Activated CD4-positive, alpha-beta memory T cell treated with anti-CD3 and anti-CD28 coated beads for 36 hours (primary cell): ENCODE measurements at regions of chr6 and their contacts with region 1.

Region 1: GRCh38 chr6:138987640-138988468 is at the start of gene REPS1:
- DNase-seq: peak; percentile 94
- H3K4me3 Mint-ChIP-seq: peak within 1 kb of the TSS; percentile 85
- H3K27ac Mint-ChIP-seq: peak within 1 kb of the TSS; percentile 89
- H3K4me1 Mint-ChIP-seq: peaks cover 19% of the 10 kb centered on the region
- H3K27me3 Mint-ChIP-seq: no peaks in the 10 kb centered on the region
- total RNA-seq, gene REPS1: 50.7 to 57.9 TPM

Region 2: DNA sequence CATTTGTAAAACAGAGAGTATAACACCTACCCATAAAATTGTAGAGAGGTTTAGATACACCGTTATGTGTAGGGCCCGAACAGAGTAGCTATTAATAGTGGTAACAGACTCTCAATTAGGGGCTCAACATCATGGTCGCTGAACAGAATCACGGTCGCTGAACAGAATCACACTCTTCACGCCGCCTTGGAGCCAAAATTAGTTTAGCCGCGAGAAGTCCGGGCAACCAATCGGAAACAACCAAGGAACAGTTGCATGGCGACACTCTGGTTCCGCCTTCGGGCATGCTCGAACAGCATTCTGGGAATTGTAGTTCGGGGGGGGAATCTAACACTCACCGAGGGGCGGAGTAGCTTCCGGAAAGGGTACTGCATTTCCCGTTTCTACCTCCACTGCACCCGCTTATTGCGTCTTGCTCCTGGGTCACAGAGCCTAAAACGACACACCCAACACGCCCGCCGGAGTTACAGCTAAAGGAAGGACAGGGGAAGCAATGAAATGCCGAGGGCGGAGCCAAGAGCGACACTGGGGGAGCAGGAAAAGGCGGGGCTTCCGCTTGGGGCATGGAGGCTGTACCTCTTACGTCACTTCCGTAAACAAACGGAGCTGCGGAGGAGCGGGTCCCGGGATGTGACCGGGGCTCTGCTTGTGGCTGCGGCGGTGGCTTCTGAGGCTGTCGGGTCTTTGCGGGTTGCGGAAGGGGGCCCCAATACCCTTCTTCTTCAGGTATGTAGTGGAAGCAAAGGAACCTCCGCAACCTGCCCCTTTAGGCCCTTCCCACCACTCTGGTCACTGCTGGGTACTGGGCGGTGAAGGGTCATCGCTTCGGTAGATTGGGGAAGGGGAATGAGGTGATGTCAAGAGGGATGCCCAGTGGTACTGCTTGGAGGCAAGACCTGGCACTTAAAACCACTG is 214.4 kb before region 1 on chr6 and contains the start of gene CCDC28A:
- CTCF ChIA-PET with region 1: interaction called, 4 read pairs
- POLR2A ChIA-PET with region 1: no interaction called
- intact Hi-C with region 1: loop called (anchors 1 kb)
- DNase-seq: peak; percentile 94
- H3K4me3 Mint-ChIP-seq: peak within 1 kb of the TSS; percentile 97
- H3K27ac Mint-ChIP-seq: peak within 1 kb of the TSS; percentile 99
- H3K4me1 Mint-ChIP-seq: peaks cover 22% of the 10 kb centered on the region
- H3K27me3 Mint-ChIP-seq: no peaks in the 10 kb centered on the region
- total RNA-seq, gene CCDC28A: 17.9 to 18.8 TPM

Region 3: DNA sequence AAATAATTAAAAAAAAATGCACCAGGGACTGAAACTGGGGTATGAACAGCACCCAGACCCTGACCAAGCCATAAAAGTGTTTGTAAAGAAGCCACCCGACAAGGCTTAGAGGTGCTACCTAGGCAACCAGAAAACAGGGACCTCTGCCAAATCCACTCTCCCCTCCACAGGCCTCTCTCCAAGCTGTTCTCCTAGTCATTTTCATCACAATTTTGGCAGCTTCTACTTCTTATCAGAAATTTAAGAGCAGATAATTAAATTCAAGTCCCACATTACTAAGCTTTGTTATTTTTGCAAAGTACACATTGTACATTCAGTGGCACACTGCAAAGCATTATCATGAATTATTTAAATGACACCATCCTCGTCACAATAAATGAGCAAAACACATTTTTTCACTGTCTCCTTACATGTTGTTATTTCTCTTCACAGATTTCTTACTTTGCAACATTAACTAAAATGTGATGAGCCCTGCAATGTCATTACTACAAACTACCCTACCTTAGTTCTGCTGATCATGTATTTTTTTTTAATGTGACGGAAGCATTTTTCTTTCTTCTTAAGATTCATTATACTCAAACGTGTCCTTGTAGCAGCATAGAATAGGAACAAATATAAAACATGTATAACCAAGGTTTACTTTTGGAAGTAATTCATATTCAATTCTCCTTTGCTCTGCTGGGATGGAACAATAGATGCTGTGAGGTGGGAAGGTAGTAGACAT is 153.9 kb before region 1 on chr6:
- CTCF ChIA-PET with region 1: no interaction called
- POLR2A ChIA-PET with region 1: no interaction called
- intact Hi-C with region 1: no loop called
- DNase-seq: no peak
- H3K4me3 Mint-ChIP-seq: no peak overlapping the region
- H3K27ac Mint-ChIP-seq: no peak overlapping the region
- H3K4me1 Mint-ChIP-seq: no peaks in the 10 kb centered on the region
- H3K27me3 Mint-ChIP-seq: no peaks in the 10 kb centered on the region

Region 4: GRCh38 chr6:138970856-138971425 is 16.9 kb before region 1 on chr6:
- CTCF ChIA-PET with region 1: interaction called, 20 read pairs
- POLR2A ChIA-PET with region 1: interaction called, 3 read pairs
- intact Hi-C with region 1: loop called (anchors 2 kb)
- DNase-seq: peak; percentile 54
- H3K4me3 Mint-ChIP-seq: no peak overlapping the region
- H3K27ac Mint-ChIP-seq: peak overlapping the region; percentile 36
- H3K4me1 Mint-ChIP-seq: peaks cover 68% of the 10 kb centered on the region
- H3K27me3 Mint-ChIP-seq: no peaks in the 10 kb centered on the region

Region 5: GRCh38 chr6:139109558-139109957 is 121.7 kb after region 1 on chr6:
- CTCF ChIA-PET with region 1: no interaction called
- POLR2A ChIA-PET with region 1: no interaction called
- intact Hi-C with region 1: loop called (anchors 5 kb)
- DNase-seq: peak; percentile 72
- H3K4me3 Mint-ChIP-seq: no peak overlapping the region
- H3K27ac Mint-ChIP-seq: no peak overlapping the region
- H3K4me1 Mint-ChIP-seq: peaks cover 47% of the 10 kb centered on the region
- H3K27me3 Mint-ChIP-seq: no peaks in the 10 kb centered on the region

Region 6: GRCh38 chr6:139230391-139230840 is 242.6 kb after region 1 on chr6:
- CTCF ChIA-PET with region 1: no interaction called
- POLR2A ChIA-PET with region 1: no interaction called
- intact Hi-C with region 1: no loop called
- DNase-seq: no peak
- H3K4me3 Mint-ChIP-seq: no peak overlapping the region
- H3K27ac Mint-ChIP-seq: no peak overlapping the region
- H3K4me1 Mint-ChIP-seq: peaks cover 12% of the 10 kb centered on the region
- H3K27me3 Mint-ChIP-seq: no peaks in the 10 kb centered on the region

Region 7: DNA sequence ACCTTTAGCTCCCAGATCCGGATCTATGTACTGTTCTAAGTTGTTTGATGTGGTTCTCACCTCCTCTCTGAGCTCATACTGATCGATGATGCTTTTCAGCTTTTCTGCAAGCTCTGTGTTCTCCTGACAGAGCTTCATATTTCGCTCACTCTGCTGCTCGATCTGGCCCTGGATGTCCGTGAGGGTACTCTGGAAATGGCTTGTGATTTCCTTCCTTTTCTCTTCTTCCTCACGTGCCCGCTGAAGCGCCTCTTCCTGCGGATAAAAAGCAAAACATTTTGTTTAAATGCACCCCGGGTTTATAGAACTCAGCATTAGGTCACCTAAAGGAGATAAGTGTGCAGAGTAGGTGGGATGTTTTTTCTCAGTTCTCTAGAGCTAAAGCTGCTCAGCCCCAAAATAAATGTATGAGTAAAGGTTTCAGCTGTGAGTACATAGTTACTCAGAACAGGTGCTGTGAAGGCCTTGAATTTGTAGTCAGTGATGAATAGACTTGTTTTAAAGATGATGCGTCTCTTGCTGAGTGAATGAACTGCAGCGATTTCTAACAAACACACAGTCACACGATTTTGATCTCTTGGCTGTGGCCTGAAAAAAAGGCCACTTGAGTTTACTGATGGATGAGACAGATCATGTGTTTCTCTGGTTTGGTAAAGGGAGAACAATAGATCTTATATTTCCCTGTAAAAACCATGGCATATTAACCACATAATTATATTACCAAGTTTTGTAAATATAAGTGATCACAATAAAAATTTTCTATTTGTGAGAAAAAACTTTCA is 274.9 kb after region 1 on chr6:
- CTCF ChIA-PET with region 1: interaction called, 3 read pairs
- POLR2A ChIA-PET with region 1: no interaction called
- intact Hi-C with region 1: loop called (anchors 5 kb)
- DNase-seq: peak; percentile 53
- H3K4me3 Mint-ChIP-seq: peak overlapping the region; percentile 70
- H3K27ac Mint-ChIP-seq: peak overlapping the region; percentile 89
- H3K4me1 Mint-ChIP-seq: peaks cover 39% of the 10 kb centered on the region
- H3K27me3 Mint-ChIP-seq: no peaks in the 10 kb centered on the region

Region 8: DNA sequence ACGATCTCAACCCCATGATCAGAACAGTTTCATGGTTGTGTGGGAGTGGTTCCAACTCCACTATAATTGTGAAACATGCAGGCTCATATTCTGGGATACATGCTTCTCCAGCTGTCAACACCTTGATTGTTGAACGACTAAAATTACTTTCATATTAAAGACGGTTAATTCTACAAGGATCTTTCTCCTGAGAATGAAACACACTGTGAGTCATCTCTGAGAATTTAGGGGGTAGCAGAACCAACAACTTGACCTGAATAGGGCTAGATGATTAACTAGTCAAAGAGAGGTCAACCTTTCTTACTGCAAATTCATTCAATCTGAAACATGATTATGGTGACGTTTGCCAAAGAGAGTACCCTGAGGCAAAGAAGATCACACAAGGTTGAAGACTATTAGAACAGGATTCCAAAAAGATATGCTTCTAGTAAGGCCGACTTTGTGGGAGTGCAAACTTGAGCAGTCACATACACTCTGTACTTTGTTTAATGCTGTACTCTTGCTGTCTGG is 561.8 kb after region 1 on chr6:
- CTCF ChIA-PET with region 1: no interaction called
- POLR2A ChIA-PET with region 1: no interaction called
- intact Hi-C with region 1: no loop called
- DNase-seq: no peak
- H3K4me3 Mint-ChIP-seq: no peak overlapping the region
- H3K27ac Mint-ChIP-seq: no peak overlapping the region
- H3K4me1 Mint-ChIP-seq: peaks cover 13% of the 10 kb centered on the region
- H3K27me3 Mint-ChIP-seq: no peaks in the 10 kb centered on the region